H1 (cell line): ENCODE measurements at regions of chr4 and their contacts with region 1.

Region 1: DNA sequence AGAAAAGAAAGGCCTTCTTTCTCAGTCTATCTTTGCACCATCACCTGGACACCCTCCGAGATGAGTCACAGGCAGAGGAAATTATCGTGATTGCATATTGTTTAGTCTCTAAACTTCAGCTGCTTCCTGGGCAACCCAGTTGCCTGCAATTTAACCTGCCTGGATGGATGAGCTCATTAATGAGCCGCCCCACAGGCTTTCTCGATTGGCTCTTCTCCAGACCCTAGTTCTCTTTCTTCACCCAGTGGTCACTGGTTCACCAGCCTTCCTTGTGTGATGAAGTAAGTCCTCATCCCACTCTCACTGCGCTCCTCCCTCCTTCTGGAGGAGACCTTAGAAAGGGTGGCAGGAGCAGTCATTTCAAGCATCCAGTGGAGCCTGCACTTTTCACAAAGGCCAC is 94.4 kb downstream of the SOWAHB start:
- DNase-seq: no peak
- H3K4me3 ChIP-seq: no peak overlapping the region; a peak in 1 of 8 replicates
- H3K27ac ChIP-seq: no peak overlapping the region
- H3K4me1 ChIP-seq: peaks cover 7 to 21% (median 15%) of the 10 kb centered on the region in 4 experiments
- H3K27me3 ChIP-seq: peaks cover 0 to 7% (median 2%) of the 10 kb centered on the region in 4 experiments; a peak in 5 of 7 replicates
- CTCF ChIP-seq: no peak
- EP300 ChIP-seq: no peak
- POLR2A ChIP-seq: no peak
- RAD21 ChIP-seq: no peak

Region 2: DNA sequence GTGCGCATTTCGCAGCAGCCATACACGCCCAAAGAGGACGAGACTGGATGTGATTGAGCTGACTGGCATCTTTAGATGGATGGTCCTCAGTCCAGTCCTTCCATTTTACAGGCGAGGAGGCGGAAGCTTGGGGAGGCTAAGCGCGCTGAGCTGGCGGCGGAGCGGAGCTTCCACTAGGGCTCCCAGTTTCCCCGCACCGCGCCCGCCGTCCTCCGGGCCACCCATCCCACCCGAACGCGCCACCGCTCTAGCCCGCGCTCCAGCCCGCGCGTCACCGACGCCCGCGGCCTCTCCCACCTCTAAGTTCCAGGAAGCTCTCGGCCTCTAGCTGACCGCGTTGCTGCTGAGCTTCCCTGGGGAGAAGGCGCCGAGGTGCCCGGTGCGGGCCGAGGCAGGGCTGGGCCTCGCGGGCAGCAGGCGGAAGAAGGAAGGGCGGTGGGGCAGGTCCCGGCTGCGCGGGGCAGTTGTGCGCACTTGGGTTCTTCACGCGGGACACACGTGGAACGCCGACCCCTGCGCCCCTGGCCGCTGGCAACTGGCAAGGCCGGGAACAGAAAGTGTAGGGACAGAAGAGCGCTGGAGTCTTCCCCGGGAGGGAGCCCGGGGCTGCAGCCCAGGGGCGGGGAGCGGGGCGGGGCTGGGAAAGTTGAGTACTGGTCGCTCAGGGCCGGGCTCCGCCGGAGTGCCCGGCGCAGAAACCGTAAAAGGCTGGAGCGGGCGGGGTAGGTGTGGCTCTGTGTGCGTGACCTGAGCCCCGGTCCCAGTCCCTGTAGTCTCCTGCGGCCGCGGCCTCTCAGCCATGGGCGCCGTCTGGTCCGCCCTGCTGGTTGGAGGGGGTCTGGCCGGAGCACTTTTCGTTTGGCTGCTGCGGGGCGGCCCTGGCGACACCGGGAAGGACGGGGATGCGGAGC is 497.3 kb before region 1 on chr4 and contains the start of gene STBD1:
- CTCF ChIA-PET with region 1: no interaction called
- POLR2A ChIA-PET with region 1: no interaction called
- DNase-seq: peak; percentile 47 to 90
- H3K4me3 ChIP-seq: peak within 1 kb of the TSS; percentile 60 to 81 (median 72)
- H3K27ac ChIP-seq: no peak within 1 kb of the TSS
- H3K4me1 ChIP-seq: no peaks in the 10 kb centered on the region; a peak in 1 of 7 replicates
- H3K27me3 ChIP-seq: peaks cover 2 to 17% (median 11%) of the 10 kb centered on the region in 4 experiments
- CTCF ChIP-seq: no peak
- EP300 ChIP-seq: no peak
- POLR2A ChIP-seq: peak in 1 of 2 experiments; percentile 34; a peak in 1 of 3 replicates
- RAD21 ChIP-seq: no peak
- total RNA-seq, gene STBD1: 1.4 and 1.7 TPM in 2 replicates

Region 3: DNA sequence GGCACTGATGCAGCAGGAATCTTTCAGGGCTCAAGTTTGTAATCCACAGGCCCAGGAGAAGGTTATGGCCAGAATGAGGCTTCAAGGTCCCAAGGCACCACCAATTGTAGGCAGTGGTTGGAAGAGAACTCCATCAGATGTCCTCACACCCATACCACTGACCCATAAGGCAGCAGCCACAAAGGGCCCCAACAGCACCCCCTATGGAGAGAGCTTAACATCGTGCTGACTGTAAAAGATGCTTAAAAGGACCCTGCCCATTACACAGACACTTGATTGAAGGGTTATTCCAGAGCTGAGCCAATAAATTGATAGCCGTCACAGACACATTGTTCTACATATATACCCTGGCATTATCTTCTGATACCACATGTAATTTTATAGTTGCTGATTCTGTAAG is 19.3 kb before region 1 on chr4:
- CTCF ChIA-PET with region 1: interaction called, 15 read pairs
- POLR2A ChIA-PET with region 1: interaction called, 6 read pairs
- DNase-seq: no peak
- H3K4me3 ChIP-seq: no peak overlapping the region
- H3K27ac ChIP-seq: no peak overlapping the region
- H3K4me1 ChIP-seq: peaks cover 2 to 13% (median 6%) of the 10 kb centered on the region in 4 experiments
- H3K27me3 ChIP-seq: no peaks in the 10 kb centered on the region
- CTCF ChIP-seq: peak; percentile 39 to 61 (median 47)
- EP300 ChIP-seq: no peak
- POLR2A ChIP-seq: no peak
- RAD21 ChIP-seq: peak; percentile 34 to 51; a peak in 3 of 4 replicates